ENCODE measurements at regions of chr11 and their contacts with region 1.

Region 1: DNA sequence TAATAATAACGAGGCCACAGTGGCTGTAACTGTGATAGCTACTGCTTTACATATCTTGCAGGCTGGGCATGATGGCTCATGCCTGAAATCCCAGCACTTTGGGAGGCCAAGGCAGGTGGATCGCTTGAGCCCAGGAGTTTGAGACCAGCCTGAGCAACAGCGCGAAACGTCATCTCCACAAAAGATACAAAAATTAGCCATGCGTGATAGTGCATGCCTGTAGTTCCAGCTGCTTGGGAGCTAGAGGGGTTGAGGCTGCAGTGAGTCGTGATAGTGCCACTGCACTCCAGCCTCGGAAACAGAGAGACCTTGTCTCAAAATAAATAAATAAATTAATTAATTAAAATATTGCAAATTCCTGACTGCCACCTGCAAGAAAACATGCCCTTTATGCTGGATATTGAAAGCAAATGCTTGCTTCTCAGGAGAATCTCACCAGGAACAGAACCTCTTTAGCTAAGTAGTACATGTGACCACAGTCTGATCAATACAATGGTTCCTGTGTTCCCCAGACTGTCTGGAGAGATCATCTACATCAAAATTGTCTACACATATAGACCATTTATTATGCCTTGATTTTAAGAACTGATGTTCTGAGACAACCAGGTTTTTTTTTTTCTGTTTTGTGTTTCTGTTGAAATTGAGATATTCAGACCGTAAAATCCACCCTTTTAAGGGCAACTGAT is 6.3 kb downstream of the ZBTB3 start:
- DNase-seq: no peak
- ATAC-seq: no peak
- H3K4me3 ChIP-seq: no peak overlapping the region
- H3K4me3 Mint-ChIP-seq: no peak overlapping the region
- H3K27ac ChIP-seq: no peak overlapping the region
- H3K27ac Mint-ChIP-seq: no peak overlapping the region
- H3K4me1 ChIP-seq: peaks cover 0 to 19% of the 10 kb centered on the region in 2 experiments
- H3K4me1 Mint-ChIP-seq: peaks cover 9 to 21% (median 16%) of the 10 kb centered on the region in 3 donors
- H3K27me3 ChIP-seq: no peaks in the 10 kb centered on the region
- H3K27me3 Mint-ChIP-seq: no peaks in the 10 kb centered on the region

Region 2: DNA sequence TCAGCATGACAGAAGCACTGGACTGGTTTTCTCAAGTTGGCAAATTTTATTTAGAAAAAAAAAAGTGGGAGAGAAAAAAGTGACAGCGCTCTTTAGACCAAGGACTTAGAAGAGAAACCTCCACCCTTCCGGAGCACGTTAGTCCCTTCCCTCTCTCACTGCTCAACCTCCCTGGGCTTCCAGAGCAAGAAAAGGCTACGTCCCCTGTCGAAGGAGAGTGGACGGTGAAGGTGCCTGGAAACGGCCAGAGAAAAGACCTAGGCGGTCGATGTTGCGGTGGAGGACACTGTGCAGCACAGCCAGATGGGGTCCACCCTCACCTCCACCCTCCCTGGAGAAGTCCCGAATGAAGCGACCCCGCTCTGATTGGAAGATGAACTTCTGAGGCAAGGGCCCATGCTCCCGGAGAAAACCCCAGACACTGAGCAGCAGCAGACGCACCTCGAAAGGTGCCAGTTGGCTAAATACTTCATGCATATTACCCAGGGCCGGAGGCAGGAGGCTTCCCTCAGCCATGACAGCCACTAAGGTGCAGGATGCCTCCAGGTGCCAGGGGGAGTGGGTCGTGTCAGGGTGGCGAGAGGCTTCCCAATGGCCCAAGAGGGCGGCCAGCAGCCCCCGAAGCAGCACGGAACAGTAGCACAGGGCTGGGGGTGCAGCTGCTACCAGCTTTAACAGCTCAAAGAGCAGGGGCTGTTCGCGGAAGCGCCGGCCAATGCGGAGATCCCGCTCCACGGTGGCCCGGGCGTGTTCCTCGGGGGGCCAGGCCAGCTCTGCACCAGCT is 100.6 kb before region 1 on chr11:
- CTCF ChIA-PET with region 1: no interaction called
- POLR2A ChIA-PET with region 1: no interaction called
- DNase-seq: no peak
- ATAC-seq: no peak
- H3K4me3 ChIP-seq: peak overlapping the region in 1 of 2 donors; percentile 100
- H3K4me3 Mint-ChIP-seq: peak overlapping the region; percentile 95 to 98 (median 97)
- H3K27ac ChIP-seq: peak overlapping the region; percentile 38
- H3K27ac Mint-ChIP-seq: peak overlapping the region; percentile 93 to 96
- H3K4me1 ChIP-seq: peaks cover 14 to 49% of the 10 kb centered on the region in 2 experiments
- H3K4me1 Mint-ChIP-seq: peaks cover 28 to 39% (median 36%) of the 10 kb centered on the region in 3 donors
- H3K27me3 ChIP-seq: no peaks in the 10 kb centered on the region
- H3K27me3 Mint-ChIP-seq: no peaks in the 10 kb centered on the region

Region 3: GRCh38 chr11:62671575-62672389 is 75.8 kb before region 1 on chr11 and contains the starts of genes LBHD1 and UQCC3:
- CTCF ChIA-PET with region 1: interaction called in 1 of 2 experiments, 11 read pairs
- POLR2A ChIA-PET with region 1: no interaction called
- DNase-seq: peak; percentile 32 to 81 (median 60)
- ATAC-seq: peak; percentile 72 to 80 (median 78)
- H3K4me3 ChIP-seq: peak within 1 kb of the TSS; percentile 82 to 96
- H3K4me3 Mint-ChIP-seq: peak within 1 kb of the TSS; percentile 98 to 99 (median 99)
- H3K27ac ChIP-seq: peak within 1 kb of the TSS; percentile 65
- H3K27ac Mint-ChIP-seq: peak within 1 kb of the TSS; percentile 98 to 99
- H3K4me1 ChIP-seq: peaks cover 7 to 45% of the 10 kb centered on the region in 2 experiments
- H3K4me1 Mint-ChIP-seq: peaks cover 57 to 62% (median 59%) of the 10 kb centered on the region in 3 donors
- H3K27me3 ChIP-seq: no peaks in the 10 kb centered on the region
- H3K27me3 Mint-ChIP-seq: no peaks in the 10 kb centered on the region
- total RNA-seq, gene LBHD1: 15.5 to 24.7 (median 20.7) TPM
- total RNA-seq, gene UQCC3: 2.7 to 9.3 (median 8.1) TPM

Region 4: DNA sequence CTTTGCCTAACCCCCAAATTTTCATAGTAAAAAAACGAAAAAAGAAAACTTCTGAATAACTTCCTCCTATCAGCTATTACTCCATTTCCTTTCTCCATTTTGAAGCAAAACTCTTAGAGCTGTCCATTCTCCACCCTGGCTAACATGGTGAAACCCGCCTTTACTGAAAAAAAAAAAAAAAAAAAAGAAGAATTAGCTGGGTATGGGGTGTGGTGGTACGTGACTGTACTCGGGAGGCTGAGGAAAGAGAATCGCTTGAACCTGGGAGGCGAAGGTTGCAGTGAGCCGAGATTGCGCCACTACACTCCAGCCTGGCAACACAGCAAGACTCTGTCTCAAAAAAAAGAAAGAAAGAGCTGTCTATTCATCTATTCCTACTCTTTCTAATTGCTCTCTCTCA is 68.9 kb after region 1 on chr11:
- CTCF ChIA-PET with region 1: no interaction called
- POLR2A ChIA-PET with region 1: interaction called, 7 to 14 read pairs
- DNase-seq: no peak
- ATAC-seq: no peak
- H3K4me3 ChIP-seq: no peak overlapping the region
- H3K4me3 Mint-ChIP-seq: no peak overlapping the region
- H3K27ac ChIP-seq: no peak overlapping the region
- H3K27ac Mint-ChIP-seq: no peak overlapping the region
- H3K4me1 ChIP-seq: no peaks in the 10 kb centered on the region
- H3K4me1 Mint-ChIP-seq: no peaks in the 10 kb centered on the region
- H3K27me3 ChIP-seq: no peaks in the 10 kb centered on the region
- H3K27me3 Mint-ChIP-seq: no peaks in the 10 kb centered on the region